PC-3 (cell line): ENCODE measurements at regions of chr12 and their contacts with region 1.

Region 1: DNA sequence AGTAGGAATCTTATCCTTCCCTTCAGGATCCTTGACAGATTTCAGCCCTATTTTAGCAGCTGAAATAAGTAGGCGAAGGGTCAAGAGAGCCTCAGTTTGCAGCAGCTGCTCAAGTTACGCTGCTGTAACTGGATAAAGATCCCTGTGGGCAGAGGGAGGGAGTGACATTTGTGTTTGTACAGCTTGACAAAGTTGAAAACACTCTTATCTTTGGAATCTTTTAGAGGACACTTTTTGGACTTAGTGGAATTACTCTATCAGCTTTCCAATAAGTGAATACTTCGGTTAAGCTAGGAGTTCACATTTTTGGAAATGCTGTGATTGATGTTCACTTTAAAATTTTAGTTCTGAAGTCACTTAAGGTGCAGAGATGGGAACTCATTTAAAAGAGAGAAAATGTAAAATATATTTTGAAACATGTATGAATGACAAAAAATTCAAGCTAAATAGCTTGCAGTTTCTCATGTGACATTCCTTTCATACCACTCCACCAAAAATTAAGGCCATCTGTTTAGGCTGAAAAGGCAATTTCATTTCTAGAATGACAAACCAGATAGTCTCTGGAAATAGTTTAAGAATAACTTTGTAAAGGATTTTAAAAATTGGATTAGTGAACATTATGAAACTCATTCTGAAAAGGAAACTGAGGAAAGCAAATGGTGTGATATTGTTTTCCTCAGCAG is 55.2 kb downstream of the SLC38A4 start:
- DNase-seq: peak; percentile 47
- ATAC-seq: peak; percentile 40
- H3K4me3 ChIP-seq: peak overlapping the region; percentile 13; the same call in 1 of the 2 replicates
- H3K27ac ChIP-seq: no peak overlapping the region
- H3K4me1 ChIP-seq: peaks cover 38% of the 10 kb centered on the region
- H3K27me3 ChIP-seq: no peaks in the 10 kb centered on the region
- CTCF ChIP-seq: no peak

Region 2: GRCh38 chr12:46573347-46573658 is 197.3 kb before region 1 on chr12:
- CTCF ChIA-PET with region 1: no interaction called
- POLR2A ChIA-PET with region 1: no interaction called
- intact Hi-C with region 1: no loop called
- DNase-seq: no peak
- ATAC-seq: no peak
- H3K4me3 ChIP-seq: no peak overlapping the region
- H3K27ac ChIP-seq: no peak overlapping the region
- H3K4me1 ChIP-seq: no peaks in the 10 kb centered on the region
- H3K27me3 ChIP-seq: no peaks in the 10 kb centered on the region
- CTCF ChIP-seq: no peak

Region 3: DNA sequence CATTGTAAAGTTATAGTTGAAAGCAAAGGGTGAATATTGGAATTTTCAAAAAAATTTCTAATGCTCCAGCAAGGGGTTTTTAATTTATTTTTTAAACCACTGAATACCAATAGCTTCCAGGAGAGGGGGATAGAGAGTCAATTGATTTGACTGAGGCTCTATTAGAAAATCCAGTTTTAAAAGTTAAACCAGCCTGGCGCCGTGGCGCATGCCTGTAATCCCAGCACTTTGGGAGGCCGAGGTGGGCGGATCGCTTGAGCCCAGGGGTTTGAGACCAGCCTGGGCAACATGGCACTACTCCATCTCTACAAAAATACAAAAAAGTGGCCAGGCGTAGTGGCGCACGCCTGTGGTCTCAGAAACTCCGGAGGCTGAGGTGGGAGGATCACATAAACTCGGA is 94.9 kb before region 1 on chr12:
- CTCF ChIA-PET with region 1: no interaction called
- POLR2A ChIA-PET with region 1: no interaction called
- intact Hi-C with region 1: loop called (anchors 5 kb)
- DNase-seq: peak; percentile 71
- ATAC-seq: no peak
- H3K4me3 ChIP-seq: no peak overlapping the region
- H3K27ac ChIP-seq: peak overlapping the region; percentile 68
- H3K4me1 ChIP-seq: peaks cover 44% of the 10 kb centered on the region
- H3K27me3 ChIP-seq: no peaks in the 10 kb centered on the region
- CTCF ChIP-seq: peak; percentile 65

Region 4: GRCh38 chr12:46785382-46785781 is 14.7 kb after region 1 on chr12:
- CTCF ChIA-PET with region 1: no interaction called
- POLR2A ChIA-PET with region 1: interaction called, 13 read pairs
- intact Hi-C with region 1: no loop called
- DNase-seq: no peak
- ATAC-seq: no peak
- H3K4me3 ChIP-seq: no peak overlapping the region
- H3K27ac ChIP-seq: no peak overlapping the region
- H3K4me1 ChIP-seq: peaks cover 22% of the 10 kb centered on the region
- H3K27me3 ChIP-seq: no peaks in the 10 kb centered on the region
- CTCF ChIP-seq: no peak

Region 5: DNA sequence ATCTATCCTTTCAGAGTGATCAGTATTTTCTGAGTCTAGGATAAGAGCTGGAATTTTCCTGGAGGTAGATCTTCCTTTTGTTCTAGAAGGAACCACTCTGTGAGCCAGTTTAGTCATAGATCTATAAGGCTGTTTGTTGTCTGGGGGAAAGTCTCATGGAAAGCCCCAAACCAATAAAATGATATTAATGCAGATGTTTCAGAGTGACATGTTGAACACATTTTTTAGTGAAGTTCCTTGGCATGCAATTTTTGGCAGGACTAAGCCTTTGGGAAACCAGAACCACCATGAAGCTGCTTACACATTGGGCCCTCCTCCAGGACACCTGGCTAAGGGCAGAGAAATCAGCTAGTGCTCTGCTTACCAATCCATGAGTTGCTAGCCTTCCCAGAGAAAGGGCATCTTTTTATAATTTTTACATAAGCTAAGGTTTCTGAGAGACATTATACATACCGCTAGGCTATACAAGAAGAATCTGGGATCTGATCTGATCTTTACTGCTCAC is 207.3 kb after region 1 on chr12:
- CTCF ChIA-PET with region 1: interaction called, 13 read pairs
- POLR2A ChIA-PET with region 1: no interaction called
- intact Hi-C with region 1: no loop called
- DNase-seq: peak; percentile 15
- ATAC-seq: no peak; the same call in 1 of the 2 replicates
- H3K4me3 ChIP-seq: no peak overlapping the region
- H3K27ac ChIP-seq: no peak overlapping the region
- H3K4me1 ChIP-seq: no peaks in the 10 kb centered on the region
- H3K27me3 ChIP-seq: no peaks in the 10 kb centered on the region
- CTCF ChIP-seq: no peak

Region 6: DNA sequence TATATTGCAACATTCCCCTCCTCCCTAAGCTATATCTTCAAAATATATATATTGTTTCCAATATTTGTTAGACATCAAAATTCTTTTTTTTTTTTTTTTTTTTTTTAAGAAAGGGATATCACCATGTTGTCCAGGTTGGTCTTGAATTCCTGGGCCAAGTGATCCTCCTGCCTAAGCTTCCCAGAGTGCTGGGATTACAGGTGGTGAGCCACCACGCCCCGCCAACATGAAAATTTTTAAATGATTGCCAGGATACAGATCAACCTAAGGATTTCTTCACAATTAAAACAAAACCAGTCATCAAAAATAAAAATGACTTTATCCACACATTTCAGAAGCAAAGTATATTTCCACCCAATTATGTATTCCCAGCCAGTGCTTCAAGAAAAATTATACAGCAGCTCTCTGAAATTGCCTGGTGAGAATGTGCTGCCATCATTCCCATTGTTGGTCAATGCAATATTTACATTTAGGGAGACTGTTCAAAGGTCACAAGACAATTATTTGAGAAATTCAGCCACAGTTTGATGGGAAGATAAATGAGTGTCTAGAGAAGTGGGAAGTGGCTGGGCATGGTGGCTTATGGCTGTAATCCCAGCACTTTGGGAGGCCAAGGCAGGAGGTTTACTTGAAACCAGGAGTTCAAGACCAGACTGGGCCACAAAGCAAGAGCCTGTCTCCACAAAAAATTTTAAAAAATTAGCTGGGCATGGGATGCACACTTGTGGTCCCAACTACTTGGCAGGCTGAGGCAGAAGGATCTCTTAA is 450.8 kb after region 1 on chr12:
- CTCF ChIA-PET with region 1: interaction called, 14 read pairs
- POLR2A ChIA-PET with region 1: no interaction called
- intact Hi-C with region 1: no loop called
- DNase-seq: peak; percentile 75
- ATAC-seq: no peak
- H3K4me3 ChIP-seq: no peak overlapping the region
- H3K27ac ChIP-seq: peak overlapping the region; percentile 92
- H3K4me1 ChIP-seq: peaks cover 62% of the 10 kb centered on the region
- H3K27me3 ChIP-seq: no peaks in the 10 kb centered on the region
- CTCF ChIP-seq: no peak

Region 7: GRCh38 chr12:48165094-48165981 is 1394.7 kb after region 1 on chr12:
- CTCF ChIA-PET with region 1: no interaction called
- POLR2A ChIA-PET with region 1: no interaction called
- intact Hi-C with region 1: no loop called
- DNase-seq: peak; percentile 69
- ATAC-seq: peak; percentile 51
- H3K4me3 ChIP-seq: no peak overlapping the region
- H3K27ac ChIP-seq: no peak overlapping the region
- H3K4me1 ChIP-seq: no peaks in the 10 kb centered on the region
- H3K27me3 ChIP-seq: no peaks in the 10 kb centered on the region
- CTCF ChIP-seq: peak; percentile 93